CD8-positive, alpha-beta T cell (primary cell): ENCODE measurements at regions of chr14 and their contacts with region 1.

Region 1: DNA sequence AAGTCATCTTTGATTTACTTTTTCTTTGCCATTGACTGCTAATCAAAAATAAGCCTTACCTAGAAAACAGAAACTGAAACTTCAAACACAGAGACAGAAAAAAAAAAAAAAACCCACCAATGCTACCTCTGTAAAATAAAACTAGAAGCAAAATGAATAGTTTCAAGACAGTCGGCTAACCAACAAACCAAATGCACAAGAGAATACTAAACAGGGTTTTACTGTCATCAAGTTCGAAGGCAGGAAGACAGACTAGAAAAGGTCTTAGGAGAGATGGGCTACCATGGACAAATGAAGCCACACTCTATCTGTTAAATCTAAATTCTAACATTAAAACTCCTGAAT is 59.5 kb downstream of the SEL1L start:
- DNase-seq: peak in 2 of 9 experiments; percentile 29 to 58
- ATAC-seq: peak; percentile 62
- H3K4me3 ChIP-seq: peak overlapping the region; percentile 10 to 31
- H3K4me3 Mint-ChIP-seq: peak overlapping the region; percentile 77
- H3K27ac ChIP-seq: peak overlapping the region; percentile 34 to 80
- H3K27ac Mint-ChIP-seq: peak overlapping the region; percentile 91
- H3K4me1 ChIP-seq: peaks cover 19% of the 10 kb centered on the region
- H3K4me1 Mint-ChIP-seq: peaks cover 24% of the 10 kb centered on the region
- H3K27me3 ChIP-seq: no peaks in the 10 kb centered on the region
- H3K27me3 Mint-ChIP-seq: no peaks in the 10 kb centered on the region
- CTCF ChIP-seq: no peak

Region 2: GRCh38 chr14:81170104-81170828 is 303.9 kb before region 1 on chr14:
- CTCF ChIA-PET with region 1: no interaction called
- POLR2A ChIA-PET with region 1: no interaction called
- intact Hi-C with region 1: loop called (anchors 5 to 10 kb)
- DNase-seq: peak; percentile 72 to 92 (median 89)
- ATAC-seq: peak; percentile 97
- H3K4me3 ChIP-seq: peak overlapping the region; percentile 67 to 70
- H3K4me3 Mint-ChIP-seq: peak overlapping the region; percentile 94
- H3K27ac ChIP-seq: peak overlapping the region; percentile 53 to 81
- H3K27ac Mint-ChIP-seq: peak overlapping the region; percentile 97
- H3K4me1 ChIP-seq: peaks cover 12% of the 10 kb centered on the region
- H3K4me1 Mint-ChIP-seq: peaks cover 20% of the 10 kb centered on the region
- H3K27me3 ChIP-seq: no peaks in the 10 kb centered on the region
- H3K27me3 Mint-ChIP-seq: no peaks in the 10 kb centered on the region
- CTCF ChIP-seq: peak; percentile 77

Region 3: DNA sequence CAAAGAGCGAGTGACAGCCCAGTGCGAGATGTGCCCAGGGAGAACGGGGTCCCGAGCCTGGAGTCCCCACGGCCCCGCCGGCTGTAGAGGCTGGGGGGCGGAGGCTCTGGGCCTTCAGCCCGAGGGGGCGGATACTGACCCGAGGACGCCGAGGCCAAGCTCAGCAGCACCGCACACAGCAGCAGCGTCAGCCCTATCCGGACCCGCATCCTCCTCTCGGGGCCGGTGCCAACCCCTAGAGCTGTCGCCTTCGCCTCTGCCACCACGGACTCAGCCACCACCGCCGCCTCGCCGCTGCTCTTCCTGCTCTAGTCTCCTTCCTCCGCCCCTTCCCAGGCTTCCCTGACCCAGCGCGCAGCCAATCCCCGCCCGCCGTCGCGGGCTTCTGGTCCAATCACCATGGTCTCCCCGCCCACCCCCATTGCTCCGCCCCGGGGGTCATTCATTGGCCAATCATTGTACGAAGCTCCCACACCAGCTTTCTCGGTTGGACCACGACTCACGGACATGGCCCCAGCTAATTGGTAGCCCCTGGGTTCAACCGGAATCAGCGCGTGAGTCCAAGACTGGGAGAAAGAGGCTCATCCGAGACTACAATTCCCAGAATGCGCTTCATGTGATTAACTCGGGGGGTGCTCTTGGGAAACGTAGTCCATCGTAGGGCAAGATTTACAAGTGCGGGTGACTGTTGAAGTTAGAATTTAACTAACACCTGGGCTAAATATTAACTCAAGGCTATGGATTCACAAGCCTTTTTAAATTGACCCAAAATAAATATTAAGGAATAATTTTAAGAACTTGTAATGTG is 59.6 kb after region 1 on chr14 and contains the start of gene SEL1L:
- CTCF ChIA-PET with region 1: no interaction called
- POLR2A ChIA-PET with region 1: no interaction called
- intact Hi-C with region 1: loop called in 1 of 2 experiments (anchors 5 kb)
- DNase-seq: peak; percentile 99 to 100 (median 99)
- ATAC-seq: peak; percentile 95
- H3K4me3 ChIP-seq: peak within 1 kb of the TSS; percentile 84 to 88
- H3K4me3 Mint-ChIP-seq: peak within 1 kb of the TSS; percentile 99
- H3K27ac ChIP-seq: peak within 1 kb of the TSS; percentile 70
- H3K27ac Mint-ChIP-seq: peak within 1 kb of the TSS; percentile 91
- H3K4me1 ChIP-seq: peaks cover 29% of the 10 kb centered on the region
- H3K4me1 Mint-ChIP-seq: peaks cover 65% of the 10 kb centered on the region
- H3K27me3 ChIP-seq: no peaks in the 10 kb centered on the region
- H3K27me3 Mint-ChIP-seq: no peaks in the 10 kb centered on the region
- CTCF ChIP-seq: no peak
- total RNA-seq, gene SEL1L: 41.2 to 46.5 TPM